ENCODE measurements at regions of chr19 and their contacts with region 1.

Region 1: DNA sequence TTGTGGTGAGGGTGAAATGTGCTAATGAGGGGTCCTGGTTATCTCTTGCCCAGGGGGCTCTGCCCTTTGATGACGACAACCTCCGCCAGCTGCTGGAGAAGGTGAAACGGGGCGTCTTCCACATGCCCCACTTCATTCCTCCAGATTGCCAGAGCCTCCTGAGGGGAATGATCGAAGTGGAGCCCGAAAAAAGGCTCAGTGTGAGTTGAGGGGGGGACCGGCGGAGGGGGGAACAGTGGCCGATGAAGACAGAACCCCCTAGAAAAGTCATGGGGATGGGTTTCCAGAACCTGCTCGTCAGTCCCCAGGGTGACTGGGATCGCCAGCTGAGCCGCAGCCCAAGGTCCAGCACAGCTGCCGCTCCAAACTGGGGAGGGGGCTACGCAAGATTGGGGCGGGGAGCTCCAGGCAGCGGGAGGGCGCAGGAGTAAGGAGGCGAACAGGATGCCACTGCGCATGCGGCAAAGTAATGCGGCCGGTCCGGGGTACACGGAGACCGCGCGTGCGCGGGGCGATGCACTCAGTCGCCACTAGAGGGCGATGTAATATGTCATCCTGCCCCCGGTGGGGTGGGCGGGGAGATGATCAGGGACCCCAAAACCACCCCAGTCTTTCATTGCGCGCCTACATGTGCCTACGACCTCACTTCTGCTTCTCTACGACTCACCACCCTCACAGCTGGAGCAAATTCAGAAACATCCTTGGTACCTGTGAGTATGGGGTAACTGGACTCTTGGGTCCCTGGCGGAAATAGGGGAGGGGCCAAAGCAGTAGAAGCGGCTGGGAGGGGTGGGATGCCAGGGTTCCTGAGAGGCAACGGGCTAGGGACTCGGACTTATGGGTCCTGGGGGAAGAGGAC is 17.9 kb downstream of the BRSK1 start:
- DNase-seq: peak; percentile 85 to 88
- H3K4me3 ChIP-seq: peak overlapping the region in 1 of 2 donors; percentile 21
- H3K27ac ChIP-seq: peak overlapping the region in 1 of 2 donors; percentile 40
- H3K4me1 ChIP-seq: peaks cover 0 to 5% of the 10 kb centered on the region in 2 donors
- H3K27me3 ChIP-seq: no peaks in the 10 kb centered on the region
- CTCF ChIP-seq: peak; percentile 93 to 99 (median 97)
- POLR2A ChIP-seq: peak; percentile 8 to 16

Region 2: GRCh38 chr19:55383789-55384577 is 82.3 kb after region 1 on chr19 and contains the start of gene TMEM238:
- intact Hi-C with region 1: loop called (anchors 5 kb)
- DNase-seq: peak; percentile 47 to 55
- H3K4me3 ChIP-seq: peak within 1 kb of the TSS; percentile 70 to 86
- H3K27ac ChIP-seq: peak within 1 kb of the TSS; percentile 89 to 97
- H3K4me1 ChIP-seq: peaks cover 17 to 30% of the 10 kb centered on the region in 2 donors
- H3K27me3 ChIP-seq: no peaks in the 10 kb centered on the region
- CTCF ChIP-seq: peak in 3 of 4 experiments; percentile 38 to 55 (median 48)
- POLR2A ChIP-seq: peak in 1 of 2 donors; percentile 36
- total RNA-seq, gene TMEM238: 0.83 to 2.3 TPM in 2 of 4 donors, not detected in the others